Psoas muscle (tissue), 8 donors: ENCODE measurements at regions of chr15 and their contacts with region 1.

Region 1: GRCh38 chr15:49439678-49440395 is 16.8 kb downstream of the FGF7 start:
- DNase-seq: no peak
- ATAC-seq: no peak
- H3K4me3 ChIP-seq: no peak overlapping the region
- H3K27ac ChIP-seq: no peak overlapping the region
- H3K4me1 ChIP-seq: no peaks in the 10 kb centered on the region
- H3K27me3 ChIP-seq: no peaks in the 10 kb centered on the region
- CTCF ChIP-seq: no peak

Region 2: GRCh38 chr15:49366496-49366895 is 73.3 kb before region 1 on chr15:
- intact Hi-C with region 1: loop called in 1 of 2 experiments (anchors 10 kb)
- DNase-seq: no peak
- ATAC-seq: no peak
- H3K4me3 ChIP-seq: no peak overlapping the region
- H3K27ac ChIP-seq: no peak overlapping the region
- H3K4me1 ChIP-seq: no peaks in the 10 kb centered on the region
- H3K27me3 ChIP-seq: no peaks in the 10 kb centered on the region
- CTCF ChIP-seq: no peak